GM12878 (cell line): ENCODE measurements at regions of chr4 and their contacts with region 1.

Region 1: DNA sequence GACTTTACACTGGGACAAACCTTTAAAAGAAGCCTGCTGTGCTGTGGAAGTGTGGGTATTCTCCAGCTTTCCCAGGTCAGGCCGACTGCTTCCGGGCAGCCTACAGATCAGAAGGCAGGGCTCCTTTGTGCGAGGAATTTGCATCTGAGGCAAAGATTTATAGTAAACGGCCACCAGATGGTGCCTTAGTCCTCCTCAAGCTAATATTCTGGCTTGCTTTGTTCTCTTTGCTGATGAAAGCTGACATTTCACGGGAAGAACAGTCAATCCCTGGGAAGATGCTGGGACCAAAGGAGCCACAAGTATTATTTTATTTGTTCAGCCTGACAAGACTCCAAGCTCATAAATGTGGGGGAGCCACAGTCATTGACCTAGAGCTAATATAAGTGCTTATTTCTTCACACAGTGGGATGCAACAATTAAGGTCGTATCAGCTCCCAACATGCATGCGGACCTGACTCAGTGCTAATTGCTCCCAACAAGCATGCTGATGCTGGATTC is 120.7 kb upstream of the TRIM2 start:
- DNase-seq: peak; percentile 40
- ATAC-seq: peak; percentile 85
- H3K4me3 ChIP-seq: no peak overlapping the region
- H3K27ac ChIP-seq: no peak overlapping the region
- H3K4me1 ChIP-seq: no peaks in the 10 kb centered on the region
- H3K27me3 ChIP-seq: no peaks in the 10 kb centered on the region; a peak in 2 of 4 replicates
- CTCF ChIP-seq: peak; percentile 53 to 76 (median 64)
- EP300 ChIP-seq: no peak
- POLR2A ChIP-seq: no peak
- RAD21 ChIP-seq: peak; percentile 65

Region 2: GRCh38 chr4:152779513-152780266 is 303.8 kb before region 1 on chr4 and contains the starts of genes ARFIP1 and TIGD4:
- CTCF ChIA-PET with region 1: interaction called, 23 read pairs
- POLR2A ChIA-PET with region 1: no interaction called
- RAD21 ChIA-PET with region 1: interaction called, 8 read pairs
- SMC1A ChIA-PET with region 1: interaction called, 6 read pairs
- in situ Hi-C with region 1: no loop called
- intact Hi-C with region 1: no loop called
- DNase-seq: peak; percentile 90
- ATAC-seq: peak; percentile 93
- H3K4me3 ChIP-seq: peak within 1 kb of the TSS; percentile 91
- H3K27ac ChIP-seq: peak within 1 kb of the TSS; percentile 87
- H3K4me1 ChIP-seq: peaks cover 5% of the 10 kb centered on the region
- H3K27me3 ChIP-seq: no peaks in the 10 kb centered on the region
- CTCF ChIP-seq: peak; percentile 23 to 50 (median 35); a peak in 5 of 6 replicates
- EP300 ChIP-seq: no peak
- POLR2A ChIP-seq: peak; percentile 84
- RAD21 ChIP-seq: peak; percentile 35; the same call in 1 of the 2 replicates
- polyA plus RNA-seq, gene ARFIP1: 9.5 to 11.0 TPM
- polyA plus RNA-seq, gene TIGD4: 0.24 to 0.31 TPM

Region 3: GRCh38 chr4:153095448-153096204 is 12.1 kb after region 1 on chr4:
- CTCF ChIA-PET with region 1: interaction called, 11 read pairs
- POLR2A ChIA-PET with region 1: no interaction called
- RAD21 ChIA-PET with region 1: interaction called, 5 read pairs
- SMC1A ChIA-PET with region 1: interaction called, 4 read pairs
- in situ Hi-C with region 1: no loop called
- intact Hi-C with region 1: no loop called
- DNase-seq: no peak
- ATAC-seq: peak; percentile 37; the same call in 2 of the 3 replicates
- H3K4me3 ChIP-seq: no peak overlapping the region
- H3K27ac ChIP-seq: no peak overlapping the region
- H3K4me1 ChIP-seq: no peaks in the 10 kb centered on the region
- H3K27me3 ChIP-seq: no peaks in the 10 kb centered on the region
- CTCF ChIP-seq: no peak
- EP300 ChIP-seq: no peak
- POLR2A ChIP-seq: no peak
- RAD21 ChIP-seq: no peak

Region 4: DNA sequence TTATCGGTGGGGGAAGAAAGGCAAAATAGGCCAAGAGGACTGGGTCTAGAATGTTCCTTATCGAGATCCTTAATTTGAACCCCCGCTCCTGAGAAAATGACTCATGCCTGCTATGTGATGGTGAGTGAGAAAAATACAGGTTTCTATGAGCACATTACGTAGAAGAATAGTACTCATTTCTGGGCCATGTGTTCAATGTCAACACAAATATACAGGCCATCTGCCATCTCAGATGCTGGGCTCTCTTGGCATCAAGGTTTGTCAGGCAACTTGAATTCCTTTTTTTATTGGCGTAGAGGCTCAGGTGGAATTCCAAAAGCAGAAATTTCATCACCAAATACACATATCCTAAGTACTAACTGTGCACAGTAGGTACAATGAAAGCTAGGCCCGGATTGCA is 39.4 kb after region 1 on chr4:
- CTCF ChIA-PET with region 1: interaction called, 269 read pairs
- POLR2A ChIA-PET with region 1: interaction called, 4 read pairs
- RAD21 ChIA-PET with region 1: interaction called, 71 read pairs
- SMC1A ChIA-PET with region 1: interaction called, 85 read pairs
- in situ Hi-C with region 1: no loop called
- intact Hi-C with region 1: loop called (anchors 1 kb)
- DNase-seq: no peak
- ATAC-seq: no peak
- H3K4me3 ChIP-seq: no peak overlapping the region
- H3K27ac ChIP-seq: no peak overlapping the region
- H3K4me1 ChIP-seq: no peaks in the 10 kb centered on the region
- H3K27me3 ChIP-seq: no peaks in the 10 kb centered on the region
- CTCF ChIP-seq: no peak
- EP300 ChIP-seq: no peak
- POLR2A ChIP-seq: no peak
- RAD21 ChIP-seq: no peak

Region 5: GRCh38 chr4:153318696-153319320 is 235.3 kb after region 1 on chr4:
- CTCF ChIA-PET with region 1: interaction called, 12 read pairs
- POLR2A ChIA-PET with region 1: no interaction called
- RAD21 ChIA-PET with region 1: no interaction called
- SMC1A ChIA-PET with region 1: interaction called, 5 read pairs
- in situ Hi-C with region 1: no loop called
- intact Hi-C with region 1: loop called (anchors 5 kb)
- DNase-seq: no peak
- ATAC-seq: peak; percentile 88
- H3K4me3 ChIP-seq: no peak overlapping the region
- H3K27ac ChIP-seq: no peak overlapping the region
- H3K4me1 ChIP-seq: no peaks in the 10 kb centered on the region
- H3K27me3 ChIP-seq: no peaks in the 10 kb centered on the region
- CTCF ChIP-seq: peak; percentile 62 to 68 (median 66)
- EP300 ChIP-seq: no peak
- POLR2A ChIP-seq: no peak
- RAD21 ChIP-seq: peak; percentile 78

Region 6: DNA sequence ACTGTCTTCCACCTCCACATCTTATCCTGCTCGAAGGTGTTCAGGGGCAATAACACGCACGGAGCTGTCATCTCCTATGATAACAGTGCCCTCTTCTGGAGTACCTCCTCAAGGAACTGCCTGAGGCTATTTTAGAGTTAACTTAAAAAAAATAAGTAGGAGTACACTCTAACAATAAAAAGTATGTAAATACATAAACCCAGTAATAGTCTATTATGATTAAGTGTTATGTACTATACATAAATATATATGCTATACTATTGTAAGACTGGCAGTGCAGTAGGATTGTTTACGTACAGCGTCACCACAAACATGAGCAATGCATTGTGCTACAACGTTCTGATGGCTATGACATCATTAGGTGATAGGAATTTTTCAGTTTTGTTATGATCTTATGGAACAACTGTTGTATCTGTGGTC is 566.1 kb after region 1 on chr4:
- CTCF ChIA-PET with region 1: interaction called, 12 read pairs
- POLR2A ChIA-PET with region 1: no interaction called
- RAD21 ChIA-PET with region 1: interaction called, 4 read pairs
- SMC1A ChIA-PET with region 1: interaction called, 8 read pairs
- in situ Hi-C with region 1: no loop called
- intact Hi-C with region 1: loop called (anchors 5 kb)
- DNase-seq: no peak
- ATAC-seq: peak; percentile 75
- H3K4me3 ChIP-seq: no peak overlapping the region
- H3K27ac ChIP-seq: no peak overlapping the region
- H3K4me1 ChIP-seq: no peaks in the 10 kb centered on the region
- H3K27me3 ChIP-seq: no peaks in the 10 kb centered on the region
- CTCF ChIP-seq: peak; percentile 39 to 50 (median 48); a peak in 5 of 6 replicates
- EP300 ChIP-seq: no peak
- POLR2A ChIP-seq: no peak
- RAD21 ChIP-seq: peak; percentile 62